Head of caudate nucleus (tissue), 42 donors: ENCODE measurements at regions of chr21 and their contacts with region 1.

Region 1: GRCh38 chr21:42724226-42724920 is 71.0 kb downstream of the PDE9A start:
- DNase-seq: peak in 1 of 42 donors; percentile 24

Region 2: GRCh38 chr21:42820616-42821474 is 96.5 kb after region 1 on chr21:
- intact Hi-C with region 1: loop called (anchors 10 kb)
- DNase-seq: no peak

Region 3: DNA sequence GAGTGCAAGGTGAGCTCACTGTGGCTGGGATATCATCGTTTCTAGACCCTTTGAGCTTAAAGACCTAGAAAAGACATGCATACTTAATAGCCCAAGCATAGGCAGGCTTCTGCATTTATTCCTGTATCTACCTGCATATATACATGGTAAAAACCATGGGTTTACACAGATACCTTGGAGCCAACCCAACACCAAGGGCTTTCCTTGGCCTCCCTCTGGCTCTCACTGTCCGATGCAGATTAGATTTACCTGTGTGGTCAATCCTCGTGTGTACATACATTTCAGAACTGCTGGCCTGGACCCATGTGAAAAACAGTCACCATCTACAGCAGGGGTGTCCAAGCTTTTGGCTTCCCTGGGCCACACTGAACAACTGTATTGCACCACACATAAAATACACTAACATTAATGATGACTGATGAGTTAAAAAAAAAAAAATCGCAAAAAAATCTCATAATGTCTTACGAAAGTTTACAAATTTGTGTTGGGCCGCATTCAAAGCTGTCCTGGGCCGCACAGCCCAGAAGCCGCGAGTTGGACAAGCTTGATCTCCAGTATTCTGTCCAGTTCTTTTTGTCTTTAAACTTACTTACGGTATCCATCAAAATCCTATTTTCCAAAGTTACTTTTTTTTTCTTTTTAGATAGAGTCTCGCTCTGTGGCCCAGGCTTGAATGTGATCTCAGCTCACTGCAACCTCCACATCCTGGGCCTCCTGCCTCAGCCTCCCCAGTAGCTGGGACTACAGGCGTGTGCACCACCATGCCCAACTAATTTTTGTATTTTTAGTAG is 111.4 kb after region 1 on chr21:
- intact Hi-C with region 1: no loop called
- DNase-seq: peak in 8 of 42 donors; percentile 2 to 40 (median 24)

Region 4: GRCh38 chr21:44626262-44626661 is 1901.9 kb after region 1 on chr21:
- intact Hi-C with region 1: no loop called
- DNase-seq: no peak